ENCODE measurements at regions of chr15 and their contacts with region 1.

Region 1: GRCh38 chr15:96273317-96274086 is 57.0 kb upstream of the NR2F2 start:
- DNase-seq: peak; percentile 80
- H3K4me3 Mint-ChIP-seq: peak overlapping the region; percentile 48
- H3K27ac Mint-ChIP-seq: peak overlapping the region; percentile 81
- H3K4me1 Mint-ChIP-seq: peaks cover 86% of the 10 kb centered on the region
- H3K27me3 Mint-ChIP-seq: no peaks in the 10 kb centered on the region
- CTCF ChIP-seq: no peak

Region 2: DNA sequence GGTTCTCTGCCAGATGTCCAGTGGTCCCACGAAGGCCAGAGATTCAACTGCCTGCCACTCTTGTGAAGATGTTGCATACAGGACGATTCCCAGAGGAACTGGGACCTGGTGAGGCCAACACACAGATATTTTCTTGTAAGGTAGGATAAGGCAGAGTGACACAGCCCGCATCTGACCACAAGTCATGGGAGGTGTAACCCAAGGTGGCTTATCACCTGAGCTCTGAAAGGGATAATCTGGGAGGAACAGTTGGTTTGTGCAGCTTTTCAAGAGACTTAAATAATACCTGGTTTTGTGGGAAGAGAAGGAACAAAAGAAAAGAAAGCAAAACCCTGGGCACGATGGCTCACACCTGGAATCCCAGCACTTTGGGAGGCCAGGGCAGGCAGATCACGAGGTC is 17.2 kb after region 1 on chr15:
- CTCF ChIA-PET with region 1: interaction called, 3 read pairs
- intact Hi-C with region 1: loop called (anchors 1 kb)
- DNase-seq: no peak
- H3K4me3 Mint-ChIP-seq: no peak overlapping the region
- H3K27ac Mint-ChIP-seq: no peak overlapping the region
- H3K4me1 Mint-ChIP-seq: peaks cover under 1% of the 10 kb centered on the region
- H3K27me3 Mint-ChIP-seq: no peaks in the 10 kb centered on the region
- CTCF ChIP-seq: no peak

Measured in Calu3 (cell line).